ENCODE measurements at regions of chr9 and their contacts with region 1.

Region 1: GRCh38 chr9:16335788-16336580 is 534.5 kb downstream of the BNC2 start:
- DNase-seq: peak; percentile 82 to 98
- H3K4me3 ChIP-seq: peak overlapping the region; percentile 35; the same call in 1 of the 2 replicates
- H3K27ac ChIP-seq: peak overlapping the region; percentile 100
- H3K4me1 ChIP-seq: peaks cover 45% of the 10 kb centered on the region
- H3K27me3 ChIP-seq: no peaks in the 10 kb centered on the region
- CTCF ChIP-seq: no peak

Region 2: GRCh38 chr9:16191691-16192402 is 144.1 kb before region 1 on chr9:
- CTCF ChIA-PET with region 1: no interaction called
- POLR2A ChIA-PET with region 1: no interaction called
- intact Hi-C with region 1: loop called (anchors 1 kb)
- DNase-seq: peak; percentile 58 to 66
- H3K4me3 ChIP-seq: no peak overlapping the region
- H3K27ac ChIP-seq: peak overlapping the region; percentile 41; the same call in 1 of the 2 replicates
- H3K4me1 ChIP-seq: peaks cover 11% of the 10 kb centered on the region; the same call in 1 of the 2 replicates
- H3K27me3 ChIP-seq: no peaks in the 10 kb centered on the region
- CTCF ChIP-seq: peak; percentile 64

Region 3: GRCh38 chr9:16252616-16253015 is 83.4 kb before region 1 on chr9:
- CTCF ChIA-PET with region 1: no interaction called
- POLR2A ChIA-PET with region 1: no interaction called
- intact Hi-C with region 1: no loop called
- DNase-seq: no peak
- H3K4me3 ChIP-seq: no peak overlapping the region
- H3K27ac ChIP-seq: no peak overlapping the region
- H3K4me1 ChIP-seq: no peaks in the 10 kb centered on the region
- H3K27me3 ChIP-seq: no peaks in the 10 kb centered on the region
- CTCF ChIP-seq: no peak

Region 4: DNA sequence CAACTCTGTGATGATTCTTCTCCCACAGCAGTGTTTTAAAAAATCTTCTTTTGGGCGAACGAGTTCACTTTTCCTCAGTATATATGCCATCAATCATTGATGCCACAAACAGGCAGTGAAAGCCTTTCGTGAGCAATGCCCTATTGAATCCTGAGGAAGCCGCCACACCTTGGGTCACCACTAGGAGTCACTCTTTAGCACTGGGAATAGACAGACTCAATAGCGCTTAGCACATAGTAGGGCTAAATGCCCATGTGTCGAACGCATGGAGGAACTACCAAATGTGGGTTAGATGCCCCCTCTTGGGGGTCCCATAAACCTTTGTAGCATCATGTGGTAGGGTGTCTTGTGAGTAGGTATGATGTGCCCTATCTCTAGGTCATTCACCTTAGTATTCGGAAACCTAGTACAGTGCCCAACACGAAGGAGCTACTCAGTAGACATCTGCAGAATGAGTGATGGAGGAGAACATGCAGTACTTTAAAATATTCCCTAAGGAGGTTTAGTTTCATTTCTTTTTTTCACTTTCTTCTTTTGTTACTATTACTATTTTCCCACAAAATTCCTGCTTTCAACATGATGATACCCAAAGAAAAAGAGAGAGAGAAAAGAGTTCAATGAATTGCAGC is 69.2 kb before region 1 on chr9:
- CTCF ChIA-PET with region 1: no interaction called
- POLR2A ChIA-PET with region 1: no interaction called
- intact Hi-C with region 1: loop called (anchors 2 kb)
- DNase-seq: no peak
- H3K4me3 ChIP-seq: peak overlapping the region; percentile 46; the same call in 1 of the 2 replicates
- H3K27ac ChIP-seq: peak overlapping the region; percentile 67
- H3K4me1 ChIP-seq: peaks cover 33% of the 10 kb centered on the region
- H3K27me3 ChIP-seq: no peaks in the 10 kb centered on the region
- CTCF ChIP-seq: peak; percentile 61

Region 5: DNA sequence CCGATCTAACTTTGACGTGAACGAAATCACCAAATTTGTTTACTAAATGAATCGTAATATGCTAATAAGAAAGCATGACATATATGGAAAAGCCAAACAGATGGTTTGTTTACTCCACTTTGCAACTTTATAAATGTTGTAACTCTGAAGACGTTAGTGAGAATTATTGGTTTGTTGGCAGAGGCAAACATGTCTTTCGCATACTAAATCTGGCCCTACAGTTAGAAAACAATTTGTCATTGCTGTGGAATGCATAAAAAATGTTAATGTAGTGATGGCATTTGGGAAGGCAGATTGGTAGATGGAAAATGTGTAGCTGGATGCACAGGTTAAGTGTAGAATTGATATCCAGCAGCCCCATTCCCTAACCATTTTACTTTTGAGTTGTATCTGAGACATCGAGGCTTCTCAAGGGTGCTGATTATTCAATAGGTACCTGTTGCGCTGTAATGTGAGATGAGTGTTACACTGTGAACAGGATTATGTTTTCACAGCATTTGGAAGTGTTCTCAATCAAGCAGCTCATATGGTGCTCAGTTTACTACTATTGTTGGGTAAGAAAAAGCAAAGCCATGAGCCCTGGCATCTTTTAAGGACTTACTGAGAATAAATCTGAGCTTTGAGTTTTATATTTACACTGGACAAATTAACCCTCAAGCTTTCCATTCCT is 89.7 kb after region 1 on chr9:
- CTCF ChIA-PET with region 1: no interaction called
- POLR2A ChIA-PET with region 1: no interaction called
- intact Hi-C with region 1: loop called (anchors 1 kb)
- DNase-seq: no peak
- H3K4me3 ChIP-seq: no peak overlapping the region
- H3K27ac ChIP-seq: no peak overlapping the region
- H3K4me1 ChIP-seq: no peaks in the 10 kb centered on the region
- H3K27me3 ChIP-seq: no peaks in the 10 kb centered on the region
- CTCF ChIP-seq: no peak

Region 6: GRCh38 chr9:16705121-16705604 is 369.2 kb after region 1 on chr9:
- CTCF ChIA-PET with region 1: no interaction called
- POLR2A ChIA-PET with region 1: interaction called, 6 read pairs
- intact Hi-C with region 1: loop called (anchors 2 kb)
- DNase-seq: peak; percentile 77 to 88
- H3K4me3 ChIP-seq: peak overlapping the region; percentile 49
- H3K27ac ChIP-seq: peak overlapping the region; percentile 95
- H3K4me1 ChIP-seq: peaks cover 48% of the 10 kb centered on the region
- H3K27me3 ChIP-seq: no peaks in the 10 kb centered on the region
- CTCF ChIP-seq: no peak

Measured in PC-9 (cell line).